AG04449 (cell line): ENCODE measurements at regions of chr14 and their contacts with region 1.

Region 1: GRCh38 chr14:37903343-37904191 is 304.1 kb upstream of the SSTR1 start:
- DNase-seq: peak; percentile 9
- H3K4me3 ChIP-seq: peak overlapping the region; percentile 15; the same call in 1 of the 2 replicates
- CTCF ChIP-seq: peak; percentile 25

Region 2: DNA sequence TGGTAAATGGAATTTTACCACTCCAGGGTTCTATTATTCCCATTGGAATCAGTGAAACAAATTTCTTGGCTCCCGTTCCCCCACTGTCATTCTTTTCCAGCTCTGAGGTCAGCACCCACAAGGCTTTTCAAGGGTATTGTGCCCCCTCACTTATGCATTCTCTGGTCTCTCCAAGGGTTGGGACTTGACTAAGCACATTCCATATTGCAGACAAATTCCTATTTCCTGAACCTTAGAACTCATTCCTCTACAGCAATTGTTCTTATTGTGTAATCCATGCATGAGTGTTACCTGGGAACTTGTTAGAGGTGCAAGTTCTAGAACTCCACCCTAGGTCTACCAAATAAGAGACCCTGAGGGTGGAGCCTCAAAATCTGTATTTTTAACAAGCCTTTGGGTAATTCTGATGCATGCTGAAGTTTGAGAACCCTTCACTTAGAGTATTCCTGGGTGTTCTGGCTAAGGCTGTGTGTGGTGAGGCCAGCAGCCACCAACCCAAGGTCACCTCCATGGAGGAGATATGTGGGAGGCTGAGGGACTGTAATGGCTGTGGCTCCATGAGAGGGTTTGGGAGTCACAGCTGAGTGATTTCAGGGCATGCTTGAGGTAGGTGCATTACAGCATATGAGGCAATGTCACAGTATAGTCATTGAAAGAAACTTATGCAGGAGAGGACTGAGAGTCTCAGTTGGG is 157.3 kb before region 1 on chr14:
- CTCF ChIA-PET with region 1: no interaction called
- POLR2A ChIA-PET with region 1: no interaction called
- DNase-seq: no peak
- H3K4me3 ChIP-seq: no peak overlapping the region
- CTCF ChIP-seq: no peak

Region 3: GRCh38 chr14:37890095-37890494 is 13.5 kb before region 1 on chr14:
- CTCF ChIA-PET with region 1: interaction called, 10 read pairs
- POLR2A ChIA-PET with region 1: no interaction called
- DNase-seq: no peak
- H3K4me3 ChIP-seq: no peak overlapping the region
- CTCF ChIP-seq: peak; percentile 9

Region 4: DNA sequence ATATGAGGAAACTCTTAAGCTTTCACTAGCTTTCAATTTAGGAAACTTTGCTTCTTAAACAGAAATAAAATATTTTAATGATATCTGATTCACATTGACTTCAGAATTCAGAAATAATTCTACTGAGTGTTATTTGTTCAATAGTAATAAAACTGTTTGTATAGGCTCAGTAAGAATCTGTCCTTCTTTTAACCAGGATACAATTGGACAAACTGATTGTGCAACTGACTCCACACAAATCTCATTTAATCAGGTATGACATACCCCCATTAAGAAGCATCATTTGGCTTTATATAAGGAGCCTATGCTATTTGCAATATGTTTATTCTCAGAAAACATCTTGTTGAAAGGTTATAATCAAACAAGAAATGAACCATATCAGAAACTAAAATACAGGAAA is 12.7 kb after region 1 on chr14:
- CTCF ChIA-PET with region 1: interaction called, 19 read pairs
- POLR2A ChIA-PET with region 1: no interaction called
- DNase-seq: no peak
- H3K4me3 ChIP-seq: no peak overlapping the region
- CTCF ChIP-seq: no peak

Region 5: DNA sequence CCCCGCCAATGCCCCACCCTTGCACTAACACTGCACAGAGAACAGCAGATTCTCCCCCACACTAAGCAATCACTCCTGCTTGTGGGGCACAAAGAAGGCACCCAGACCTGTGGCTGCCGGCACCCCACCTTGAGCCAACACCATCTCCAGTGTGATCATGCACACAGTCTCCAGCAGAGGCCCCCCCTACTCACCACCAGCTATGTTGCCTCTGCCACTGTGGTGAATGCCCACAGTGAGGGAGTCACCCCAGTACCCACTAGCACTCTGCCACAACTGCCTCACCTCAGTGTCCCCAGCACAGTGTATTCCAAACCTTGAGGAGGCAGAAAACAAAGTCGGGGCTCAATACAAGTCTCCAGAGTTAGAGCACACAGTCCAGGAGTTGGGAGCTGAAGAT is 42.4 kb after region 1 on chr14:
- CTCF ChIA-PET with region 1: no interaction called
- POLR2A ChIA-PET with region 1: no interaction called
- DNase-seq: no peak
- H3K4me3 ChIP-seq: no peak overlapping the region
- CTCF ChIP-seq: no peak

Region 6: DNA sequence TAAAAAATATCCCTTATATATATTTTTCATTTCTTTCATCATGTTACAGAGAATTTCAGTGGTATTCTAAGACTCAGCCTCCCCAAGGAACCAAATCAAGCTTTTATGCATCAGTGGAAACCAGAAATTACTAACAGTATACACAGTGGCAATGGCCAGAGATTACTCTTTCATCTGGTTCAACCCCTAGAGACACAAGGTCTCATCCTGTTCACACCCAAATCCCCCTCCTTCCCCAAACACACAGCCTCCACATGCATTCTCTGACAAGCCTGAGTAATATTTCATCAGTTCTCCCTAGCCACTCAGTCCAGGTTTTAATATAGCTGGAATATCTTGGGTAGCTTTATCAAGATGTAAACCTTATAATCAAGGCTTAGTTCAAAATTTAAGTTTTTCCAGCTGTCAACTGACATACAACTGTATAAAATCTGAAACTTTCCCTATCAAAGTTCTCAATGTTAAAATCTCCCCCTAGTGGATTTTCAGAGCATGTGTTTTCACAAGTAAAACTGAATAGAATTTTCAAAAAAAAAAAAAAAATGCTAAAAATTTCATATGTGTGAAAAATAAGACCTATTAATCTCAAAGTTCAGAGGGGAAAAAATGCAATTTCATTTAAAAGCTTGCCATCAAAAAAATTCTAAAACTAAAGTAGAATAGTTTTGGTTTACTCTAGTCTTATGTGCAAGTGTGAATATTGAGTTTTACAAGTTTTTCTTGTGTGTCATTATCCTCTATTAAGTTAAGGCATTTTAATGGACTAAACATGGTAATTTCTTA is 293.6 kb after region 1 on chr14:
- CTCF ChIA-PET with region 1: interaction called, 63 read pairs
- POLR2A ChIA-PET with region 1: no interaction called
- DNase-seq: no peak
- H3K4me3 ChIP-seq: no peak overlapping the region
- CTCF ChIP-seq: no peak

Region 7: DNA sequence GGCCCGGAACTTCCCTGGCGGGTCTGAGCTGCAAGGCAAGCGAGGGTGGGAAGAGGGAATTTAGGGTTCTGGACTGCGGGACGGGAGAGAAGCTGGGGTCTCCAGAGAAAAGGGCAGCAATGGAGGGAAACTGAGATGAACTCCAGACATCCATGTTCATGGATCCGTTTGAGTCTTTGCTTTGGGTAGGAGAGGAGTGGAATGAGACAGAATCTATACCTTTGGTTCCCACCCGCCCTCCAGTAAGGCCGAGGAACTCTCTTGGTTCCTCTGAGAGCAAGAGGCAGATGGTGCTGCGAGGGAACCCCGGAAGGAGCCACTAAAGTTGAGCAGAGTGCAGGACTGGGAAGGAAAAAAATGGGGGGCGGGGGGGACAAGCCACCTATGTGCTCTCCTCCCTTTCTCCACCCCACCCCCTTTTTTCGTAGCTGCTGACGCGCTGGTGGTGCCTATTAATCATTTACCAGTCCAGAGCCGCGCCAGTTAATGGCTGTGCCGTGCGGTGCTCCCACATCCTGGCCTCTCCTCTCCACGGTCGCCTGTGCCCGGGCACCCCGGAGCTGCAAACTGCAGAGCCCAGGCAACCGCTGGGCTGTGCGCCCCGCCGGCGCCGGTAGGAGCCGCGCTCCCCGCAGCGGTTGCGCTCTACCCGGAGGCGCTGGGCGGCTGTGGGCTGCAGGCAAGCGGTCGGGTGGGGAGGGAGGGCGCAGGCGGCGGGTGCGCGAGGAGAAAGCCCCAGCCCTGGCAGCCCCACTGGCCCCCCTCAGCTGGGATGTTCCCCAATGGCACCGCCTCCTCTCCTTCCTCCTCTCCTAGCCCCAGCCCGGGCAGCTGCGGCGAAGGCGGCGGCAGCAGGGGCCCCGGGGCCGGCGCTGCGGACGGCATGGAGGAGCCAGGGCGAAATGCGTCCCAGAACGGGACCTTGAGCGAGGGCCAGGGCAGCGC is 305.3 kb after region 1 on chr14:
- CTCF ChIA-PET with region 1: interaction called, 20 read pairs
- POLR2A ChIA-PET with region 1: no interaction called
- DNase-seq: no peak
- H3K4me3 ChIP-seq: peak overlapping the region; percentile 81
- CTCF ChIP-seq: peak; percentile 82

Region 8: GRCh38 chr14:38309522-38310277 is 406.1 kb after region 1 on chr14:
- CTCF ChIA-PET with region 1: no interaction called
- POLR2A ChIA-PET with region 1: no interaction called
- DNase-seq: no peak
- H3K4me3 ChIP-seq: no peak overlapping the region
- CTCF ChIP-seq: no peak

Region 9: DNA sequence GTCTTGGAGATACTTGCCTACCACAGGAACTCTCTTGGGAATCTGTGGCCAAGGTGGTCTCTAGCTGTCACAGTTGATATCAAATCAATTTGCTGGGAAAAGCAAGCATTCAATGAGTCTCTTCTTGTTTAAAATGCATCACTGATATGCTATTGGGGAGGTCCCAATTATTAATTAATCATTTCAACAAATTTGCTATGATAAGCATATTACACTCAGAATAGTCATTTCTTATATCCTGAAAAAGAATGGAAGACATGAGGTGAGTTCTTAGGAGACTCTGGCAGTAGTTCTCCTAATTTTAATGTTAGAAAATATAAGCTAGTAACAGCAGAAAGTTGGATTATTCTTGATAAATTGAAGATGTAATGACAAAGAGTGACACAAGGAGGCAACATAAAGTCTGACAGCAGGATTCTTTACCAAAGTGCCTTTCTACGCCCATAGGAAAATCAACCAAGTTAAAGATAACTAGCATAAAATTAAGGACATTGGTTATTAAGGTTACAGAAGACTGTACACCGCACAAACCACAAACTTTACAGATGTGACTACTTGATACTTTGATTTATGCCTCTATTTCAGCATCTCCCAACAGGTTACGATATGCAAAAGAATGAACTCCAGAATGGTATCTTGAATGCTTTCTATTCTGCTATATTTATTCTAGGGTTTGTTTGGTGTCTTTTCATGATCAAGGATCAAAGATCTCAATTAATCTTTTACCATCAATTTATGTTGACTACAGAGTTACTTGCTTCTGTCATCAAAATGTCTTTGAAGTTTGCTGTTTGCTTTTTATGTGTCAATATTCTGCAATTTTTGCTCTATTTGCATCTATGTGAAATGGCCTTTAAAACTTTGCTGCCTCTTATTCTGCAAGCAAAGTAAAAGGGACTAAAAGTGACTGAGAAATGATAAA is 701.9 kb after region 1 on chr14:
- CTCF ChIA-PET with region 1: interaction called, 11 read pairs
- POLR2A ChIA-PET with region 1: no interaction called
- DNase-seq: no peak
- H3K4me3 ChIP-seq: no peak overlapping the region
- CTCF ChIP-seq: peak; percentile 3

Region 10: GRCh38 chr14:39015360-39015961 is 1111.9 kb after region 1 on chr14:
- CTCF ChIA-PET with region 1: interaction called, 33 read pairs
- POLR2A ChIA-PET with region 1: no interaction called
- DNase-seq: no peak
- H3K4me3 ChIP-seq: no peak overlapping the region
- CTCF ChIP-seq: peak; percentile 72